Activated CD4-positive, alpha-beta memory T cell treated with anti-CD3 and anti-CD28 coated beads, Interleukin-2, amount 10 ng/mL, durations not matched to agents 7 days and 5 days (primary cell): ENCODE measurements at regions of chr6 and their contacts with region 1.

Region 1: DNA sequence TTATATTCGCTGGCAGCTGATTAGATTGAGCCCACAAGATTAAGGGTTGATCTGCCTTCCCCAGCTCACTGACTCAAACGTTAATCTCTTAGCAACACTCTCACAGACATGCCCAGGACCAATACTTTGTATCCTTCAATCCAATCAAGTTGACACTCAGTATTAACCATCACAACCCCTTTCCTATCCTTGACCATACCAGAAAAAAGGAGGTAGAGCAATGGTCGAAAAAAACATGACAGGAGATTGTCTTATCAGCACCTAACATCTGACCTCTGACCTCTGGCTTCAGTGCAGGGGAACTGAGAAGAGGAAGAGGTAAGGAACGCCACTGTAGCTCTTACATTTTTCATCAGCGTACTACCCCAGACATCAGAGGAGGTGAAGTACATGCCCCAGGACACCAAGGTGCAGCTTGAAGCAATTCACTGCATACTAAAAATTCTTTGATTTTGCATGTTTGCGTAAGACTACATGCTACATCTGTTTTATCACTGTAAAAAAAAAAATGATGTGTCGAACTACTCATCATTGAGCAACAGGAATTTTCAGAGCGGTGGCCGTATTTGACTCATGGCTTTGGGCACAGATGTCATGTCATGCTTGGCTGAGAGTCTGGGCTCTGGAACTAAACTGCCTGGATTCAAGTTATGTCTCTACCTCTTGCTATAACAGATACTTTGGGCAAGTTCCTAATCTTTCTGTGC is 188.0 kb upstream of the TAB2 start:
- DNase-seq: no peak
- H3K4me3 Mint-ChIP-seq: no peak overlapping the region
- H3K27ac Mint-ChIP-seq: peak overlapping the region; percentile 91
- H3K4me1 Mint-ChIP-seq: peaks cover 8% of the 10 kb centered on the region
- H3K27me3 Mint-ChIP-seq: no peaks in the 10 kb centered on the region

Region 2: GRCh38 chr6:149020319-149020718 is 109.2 kb before region 1 on chr6:
- CTCF ChIA-PET with region 1: no interaction called
- POLR2A ChIA-PET with region 1: no interaction called
- DNase-seq: no peak
- H3K4me3 Mint-ChIP-seq: no peak overlapping the region
- H3K27ac Mint-ChIP-seq: no peak overlapping the region
- H3K4me1 Mint-ChIP-seq: no peaks in the 10 kb centered on the region
- H3K27me3 Mint-ChIP-seq: no peaks in the 10 kb centered on the region

Region 3: DNA sequence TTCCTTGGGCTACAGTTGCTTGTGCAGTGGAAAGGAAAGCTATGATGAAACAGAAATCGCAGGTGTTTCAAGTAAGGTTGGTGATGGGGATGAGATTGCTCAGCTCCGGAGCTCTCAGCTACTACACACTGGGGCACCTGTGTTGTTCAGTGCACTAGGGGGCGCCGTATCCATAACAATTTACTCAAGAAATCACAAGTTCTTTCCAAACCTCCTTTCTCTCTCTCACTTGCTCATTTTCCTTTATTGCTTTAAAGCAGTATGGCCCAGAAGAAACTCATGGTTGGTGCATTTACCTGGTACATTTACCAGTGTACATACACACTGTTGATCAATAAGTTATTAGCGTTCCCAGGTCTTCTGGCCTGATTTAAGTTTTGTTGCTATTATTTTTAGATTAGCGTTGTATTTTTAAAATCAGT is 47.2 kb before region 1 on chr6:
- CTCF ChIA-PET with region 1: interaction called, 5 read pairs
- POLR2A ChIA-PET with region 1: interaction called, 85 read pairs
- DNase-seq: peak; percentile 91
- H3K4me3 Mint-ChIP-seq: peak overlapping the region; percentile 50
- H3K27ac Mint-ChIP-seq: peak overlapping the region; percentile 96
- H3K4me1 Mint-ChIP-seq: peaks cover 87% of the 10 kb centered on the region
- H3K27me3 Mint-ChIP-seq: no peaks in the 10 kb centered on the region

Region 4: DNA sequence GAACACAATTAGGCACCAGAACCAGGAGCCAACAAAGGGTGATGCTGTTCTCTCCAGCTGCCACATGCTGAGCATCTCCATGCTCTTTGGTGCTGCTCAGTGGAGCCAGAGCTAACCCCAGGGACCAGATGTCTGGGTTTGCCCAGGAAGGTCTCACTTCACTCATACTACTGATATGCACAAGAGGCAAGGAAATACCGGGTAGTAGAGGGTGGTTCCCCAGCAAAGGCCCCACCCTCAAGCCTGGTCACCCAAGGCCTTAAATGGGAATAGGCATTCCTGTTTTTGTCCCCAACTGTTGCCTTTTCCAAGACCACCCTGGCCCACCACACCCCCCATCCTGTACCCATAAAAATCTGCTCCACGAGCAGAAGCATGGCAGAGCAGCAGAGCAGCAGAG is 16.5 kb before region 1 on chr6:
- CTCF ChIA-PET with region 1: no interaction called
- POLR2A ChIA-PET with region 1: interaction called, 14 read pairs
- DNase-seq: no peak
- H3K4me3 Mint-ChIP-seq: no peak overlapping the region
- H3K27ac Mint-ChIP-seq: peak overlapping the region; percentile 65
- H3K4me1 Mint-ChIP-seq: peaks cover 52% of the 10 kb centered on the region
- H3K27me3 Mint-ChIP-seq: no peaks in the 10 kb centered on the region

Region 5: GRCh38 chr6:149140137-149140909 is 10.8 kb after region 1 on chr6:
- CTCF ChIA-PET with region 1: interaction called, 18 read pairs
- POLR2A ChIA-PET with region 1: interaction called, 118 read pairs
- DNase-seq: peak; percentile 88
- H3K4me3 Mint-ChIP-seq: peak overlapping the region; percentile 77
- H3K27ac Mint-ChIP-seq: peak overlapping the region; percentile 96
- H3K4me1 Mint-ChIP-seq: peaks cover 63% of the 10 kb centered on the region
- H3K27me3 Mint-ChIP-seq: no peaks in the 10 kb centered on the region

Region 6: GRCh38 chr6:149235130-149235561 is 105.6 kb after region 1 on chr6:
- CTCF ChIA-PET with region 1: no interaction called
- POLR2A ChIA-PET with region 1: no interaction called
- DNase-seq: no peak
- H3K4me3 Mint-ChIP-seq: no peak overlapping the region
- H3K27ac Mint-ChIP-seq: peak overlapping the region; percentile 93
- H3K4me1 Mint-ChIP-seq: peaks cover 51% of the 10 kb centered on the region
- H3K27me3 Mint-ChIP-seq: no peaks in the 10 kb centered on the region

Region 7: DNA sequence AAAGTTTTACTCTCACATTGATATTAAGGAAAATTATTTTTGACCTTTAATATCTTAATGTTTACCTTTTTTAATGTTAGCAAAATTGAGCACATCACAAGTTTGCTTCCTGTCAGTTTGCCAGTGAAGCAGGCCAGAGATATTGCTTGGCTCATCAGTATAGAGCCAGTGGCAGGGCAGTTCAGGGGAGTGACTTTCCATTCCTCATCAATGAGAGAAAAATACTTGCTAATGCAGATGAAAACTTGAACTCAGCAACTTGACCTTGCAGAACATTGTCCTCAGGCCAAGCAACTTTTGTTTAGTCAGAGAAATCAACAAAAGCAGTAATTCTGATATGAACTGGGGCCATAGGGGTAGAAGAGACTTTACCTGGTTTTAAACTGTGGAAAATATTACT is 194.9 kb after region 1 on chr6:
- CTCF ChIA-PET with region 1: no interaction called
- POLR2A ChIA-PET with region 1: interaction called, 47 read pairs
- DNase-seq: peak; percentile 38
- H3K4me3 Mint-ChIP-seq: peak overlapping the region; percentile 53
- H3K27ac Mint-ChIP-seq: peak overlapping the region; percentile 64
- H3K4me1 Mint-ChIP-seq: peaks cover 76% of the 10 kb centered on the region
- H3K27me3 Mint-ChIP-seq: no peaks in the 10 kb centered on the region